Naive thymus-derived CD4-positive, alpha-beta T cell (primary cell): ENCODE measurements at regions of chr6 and their contacts with region 1.

Region 1: GRCh38 chr6:111113336-111114086 is 26.2 kb downstream of the SLC16A10 start:
- DNase-seq: peak in 4 of 9 donors; percentile 23 to 33 (median 23)
- ATAC-seq: peak; percentile 75
- H3K4me3 ChIP-seq: peak overlapping the region; percentile 1
- H3K4me3 Mint-ChIP-seq: peak overlapping the region; percentile 13 to 90 (median 74)
- H3K27ac ChIP-seq: peak overlapping the region; percentile 58
- H3K27ac Mint-ChIP-seq: peak overlapping the region; percentile 53 to 96 (median 93)
- H3K4me1 ChIP-seq: peaks cover 5 to 26% of the 10 kb centered on the region in 2 donors
- H3K4me1 Mint-ChIP-seq: peaks cover 12 to 74% (median 46%) of the 10 kb centered on the region in 7 donors
- H3K27me3 ChIP-seq: no peaks in the 10 kb centered on the region
- H3K27me3 Mint-ChIP-seq: no peaks in the 10 kb centered on the region

Region 2: DNA sequence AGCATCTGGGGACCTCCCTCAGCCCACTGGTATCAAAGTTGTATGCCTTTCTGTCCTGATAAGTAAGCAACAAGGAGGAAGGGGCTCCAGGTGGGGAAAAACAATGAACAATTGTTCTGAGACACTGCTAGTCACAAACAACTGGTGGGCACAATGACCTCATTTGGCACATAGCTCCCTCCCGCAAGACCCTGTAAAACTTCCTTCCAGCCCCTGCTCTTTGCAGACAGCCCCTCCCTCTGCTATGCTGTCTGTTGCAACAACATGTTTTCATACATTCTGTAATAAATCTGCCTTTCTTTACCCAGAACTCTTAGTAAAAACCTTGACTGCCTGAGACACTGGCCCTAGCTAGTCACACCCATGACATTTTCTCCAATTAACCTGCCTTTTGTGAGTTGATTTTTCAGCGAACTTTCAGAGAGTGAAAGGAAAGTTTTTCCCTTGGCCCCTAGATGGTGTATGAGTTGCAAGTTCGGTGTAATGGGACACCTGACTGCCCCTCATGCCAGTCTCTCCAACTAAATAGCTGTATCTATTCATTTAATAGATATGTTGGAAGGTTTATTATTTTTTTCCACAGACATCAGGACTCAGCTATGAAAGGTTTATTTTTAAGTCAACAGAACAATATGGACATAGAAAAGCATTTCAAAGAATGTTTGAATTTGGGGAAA is 494.8 kb before region 1 on chr6:
- CTCF ChIA-PET with region 1: no interaction called
- POLR2A ChIA-PET with region 1: no interaction called
- intact Hi-C with region 1: no loop called
- DNase-seq: no peak
- ATAC-seq: no peak
- H3K4me3 ChIP-seq: no peak overlapping the region
- H3K4me3 Mint-ChIP-seq: no peak overlapping the region
- H3K27ac ChIP-seq: no peak overlapping the region
- H3K27ac Mint-ChIP-seq: peak overlapping the region in 2 of 9 donors; percentile 15 to 58
- H3K4me1 ChIP-seq: no peaks in the 10 kb centered on the region
- H3K4me1 Mint-ChIP-seq: peaks cover 0 to 14% (median 0%) of the 10 kb centered on the region in 7 donors
- H3K27me3 ChIP-seq: no peaks in the 10 kb centered on the region
- H3K27me3 Mint-ChIP-seq: no peaks in the 10 kb centered on the region

Region 3: GRCh38 chr6:111096246-111096645 is 17.3 kb before region 1 on chr6:
- CTCF ChIA-PET with region 1: no interaction called
- POLR2A ChIA-PET with region 1: interaction called, 5 read pairs
- intact Hi-C with region 1: loop called in 1 of 2 experiments (anchors 1 kb)
- DNase-seq: peak in 8 of 9 donors; percentile 15 to 85 (median 82)
- ATAC-seq: peak; percentile 90
- H3K4me3 ChIP-seq: no peak overlapping the region
- H3K4me3 Mint-ChIP-seq: peak overlapping the region in 9 of 10 donors; percentile 38 to 82 (median 68)
- H3K27ac ChIP-seq: peak overlapping the region; percentile 45
- H3K27ac Mint-ChIP-seq: peak overlapping the region; percentile 38 to 95 (median 92)
- H3K4me1 ChIP-seq: peaks cover 0 to 30% of the 10 kb centered on the region in 2 donors
- H3K4me1 Mint-ChIP-seq: peaks cover 7 to 68% (median 53%) of the 10 kb centered on the region in 7 donors
- H3K27me3 ChIP-seq: no peaks in the 10 kb centered on the region
- H3K27me3 Mint-ChIP-seq: no peaks in the 10 kb centered on the region